Activated CD4-positive, alpha-beta T cell treated with anti-CD3 and anti-CD28 coated beads for 36 hours (primary cell): ENCODE measurements at regions of chr1 and their contacts with region 1.

Region 1: GRCh38 chr1:28248283-28249012 is 10.9 kb upstream of the SESN2 start:
- DNase-seq: peak; percentile 92
- ATAC-seq: peak; percentile 31
- H3K4me3 Mint-ChIP-seq: peak overlapping the region; percentile 82
- H3K27ac Mint-ChIP-seq: peak overlapping the region; percentile 83
- H3K4me1 Mint-ChIP-seq: peaks cover 54% of the 10 kb centered on the region
- H3K27me3 Mint-ChIP-seq: no peaks in the 10 kb centered on the region

Region 2: GRCh38 chr1:27234049-27234882 is 1014.2 kb before region 1 on chr1 and contains the start of gene WDTC1:
- CTCF ChIA-PET with region 1: no interaction called
- POLR2A ChIA-PET with region 1: no interaction called
- intact Hi-C with region 1: loop called in 1 of 2 experiments (anchors 5 kb)
- DNase-seq: peak; percentile 99
- ATAC-seq: peak; percentile 95
- H3K4me3 Mint-ChIP-seq: peak within 1 kb of the TSS; percentile 95
- H3K27ac Mint-ChIP-seq: peak within 1 kb of the TSS; percentile 93
- H3K4me1 Mint-ChIP-seq: peaks cover 27% of the 10 kb centered on the region
- H3K27me3 Mint-ChIP-seq: no peaks in the 10 kb centered on the region
- total RNA-seq, gene WDTC1: 19.3 to 21.9 TPM

Region 3: DNA sequence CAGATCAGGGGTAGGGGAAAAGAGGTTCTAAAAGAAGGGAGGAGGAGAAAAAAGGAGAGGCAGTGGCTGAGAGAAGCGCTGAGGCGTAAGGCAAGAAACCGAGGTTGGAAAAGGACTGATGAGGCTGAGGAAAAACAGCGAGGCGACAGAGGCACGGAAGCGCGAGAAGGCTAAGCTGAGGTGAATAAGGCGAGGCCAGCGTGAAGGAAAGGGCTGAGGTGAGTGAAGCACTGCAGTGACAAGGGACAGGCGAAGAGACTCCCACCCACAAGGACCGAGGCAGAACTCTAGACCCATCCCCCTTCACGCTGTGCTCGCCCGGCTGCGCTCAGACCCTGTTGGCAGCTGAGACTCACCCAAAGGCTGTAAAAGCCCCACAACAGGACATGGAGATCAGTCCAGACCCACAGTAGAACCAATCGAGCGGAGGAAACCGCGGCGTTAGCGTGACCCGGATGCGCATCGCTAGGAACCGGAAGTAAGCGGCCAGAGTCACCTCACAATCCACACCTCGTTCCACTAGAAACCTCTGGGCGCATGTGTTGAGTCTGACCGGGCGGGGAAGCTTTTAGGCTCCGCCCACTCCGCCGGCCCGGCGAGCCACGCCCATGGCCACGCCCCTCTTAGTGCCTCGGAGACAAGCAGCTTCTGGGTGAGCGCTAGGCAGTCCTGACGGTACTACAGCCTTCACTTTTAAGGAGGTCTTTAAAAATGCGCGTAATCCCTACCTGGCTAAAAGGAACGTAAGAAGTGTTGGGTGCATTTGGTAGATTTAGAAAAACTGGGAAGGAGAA is 160.1 kb before region 1 on chr1 and contains the start of gene EYA3:
- CTCF ChIA-PET with region 1: interaction called, 4 read pairs
- POLR2A ChIA-PET with region 1: interaction called, 5 read pairs
- intact Hi-C with region 1: loop called in 1 of 2 experiments (anchors 1 kb)
- DNase-seq: peak; percentile 99
- ATAC-seq: peak; percentile 93
- H3K4me3 Mint-ChIP-seq: peak within 1 kb of the TSS; percentile 98
- H3K27ac Mint-ChIP-seq: peak within 1 kb of the TSS; percentile 98
- H3K4me1 Mint-ChIP-seq: peaks cover 27% of the 10 kb centered on the region
- H3K27me3 Mint-ChIP-seq: no peaks in the 10 kb centered on the region
- total RNA-seq, gene EYA3: 30.1 to 37.1 TPM

Region 4: DNA sequence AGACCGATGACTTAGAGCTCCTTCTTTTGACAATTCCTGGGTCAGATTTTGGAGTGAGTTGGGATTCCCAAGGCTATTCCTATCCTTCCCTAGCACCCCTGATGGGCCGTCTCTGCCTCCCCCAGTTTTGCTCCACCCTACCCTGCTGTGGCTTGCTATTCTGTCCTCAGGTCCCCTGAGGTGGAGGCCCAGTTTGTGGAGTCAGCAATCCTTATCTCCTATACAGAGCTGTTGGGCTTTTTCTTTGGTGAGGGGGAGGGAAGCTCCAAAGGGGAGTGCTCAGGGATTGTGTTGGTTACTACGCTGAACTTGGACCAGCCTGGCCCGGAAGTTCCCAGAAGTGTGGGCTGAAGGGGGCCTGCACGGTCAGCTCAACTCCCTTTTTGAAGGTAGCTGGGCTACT is 18.5 kb after region 1 on chr1:
- CTCF ChIA-PET with region 1: interaction called, 77 read pairs
- POLR2A ChIA-PET with region 1: interaction called, 23 read pairs
- intact Hi-C with region 1: no loop called
- DNase-seq: no peak
- ATAC-seq: no peak
- H3K4me3 Mint-ChIP-seq: no peak overlapping the region
- H3K27ac Mint-ChIP-seq: no peak overlapping the region
- H3K4me1 Mint-ChIP-seq: peaks cover 4% of the 10 kb centered on the region
- H3K27me3 Mint-ChIP-seq: no peaks in the 10 kb centered on the region

Region 5: GRCh38 chr1:28369371-28370238 is 121.2 kb after region 1 on chr1 and contains the start of gene PHACTR4:
- CTCF ChIA-PET with region 1: interaction called, 3 read pairs
- POLR2A ChIA-PET with region 1: interaction called, 9 read pairs
- intact Hi-C with region 1: loop called in 1 of 2 experiments (anchors 1 kb)
- DNase-seq: peak; percentile 90
- ATAC-seq: peak; percentile 93
- H3K4me3 Mint-ChIP-seq: peak within 1 kb of the TSS; percentile 92
- H3K27ac Mint-ChIP-seq: peak within 1 kb of the TSS; percentile 92
- H3K4me1 Mint-ChIP-seq: peaks cover 25% of the 10 kb centered on the region
- H3K27me3 Mint-ChIP-seq: no peaks in the 10 kb centered on the region
- total RNA-seq, gene PHACTR4: 23.0 to 30.1 TPM

Region 6: GRCh38 chr1:28642847-28643635 is 394.6 kb after region 1 on chr1 and contains the start of gene TAF12:
- CTCF ChIA-PET with region 1: interaction called, 3 read pairs
- POLR2A ChIA-PET with region 1: no interaction called
- intact Hi-C with region 1: loop called (anchors 1 to 5 kb)
- DNase-seq: peak; percentile 95
- ATAC-seq: peak; percentile 81
- H3K4me3 Mint-ChIP-seq: peak within 1 kb of the TSS; percentile 98
- H3K27ac Mint-ChIP-seq: peak within 1 kb of the TSS; percentile 97
- H3K4me1 Mint-ChIP-seq: peaks cover 50% of the 10 kb centered on the region
- H3K27me3 Mint-ChIP-seq: no peaks in the 10 kb centered on the region
- total RNA-seq, gene TAF12: 23.8 to 32.5 TPM

Region 7: GRCh38 chr1:29181413-29182225 is 933.2 kb after region 1 on chr1 and contains the start of gene SRSF4:
- CTCF ChIA-PET with region 1: no interaction called
- POLR2A ChIA-PET with region 1: no interaction called
- intact Hi-C with region 1: loop called in 1 of 2 experiments (anchors 5 kb)
- DNase-seq: peak; percentile 100
- ATAC-seq: peak; percentile 91
- H3K4me3 Mint-ChIP-seq: peak within 1 kb of the TSS; percentile 87
- H3K27ac Mint-ChIP-seq: peak within 1 kb of the TSS; percentile 99
- H3K4me1 Mint-ChIP-seq: peaks cover 39% of the 10 kb centered on the region
- H3K27me3 Mint-ChIP-seq: no peaks in the 10 kb centered on the region
- total RNA-seq, gene SRSF4: 129 to 147 TPM